GM12878 (cell line): ENCODE measurements at regions of chr17 and their contacts with region 1.

Region 1: DNA sequence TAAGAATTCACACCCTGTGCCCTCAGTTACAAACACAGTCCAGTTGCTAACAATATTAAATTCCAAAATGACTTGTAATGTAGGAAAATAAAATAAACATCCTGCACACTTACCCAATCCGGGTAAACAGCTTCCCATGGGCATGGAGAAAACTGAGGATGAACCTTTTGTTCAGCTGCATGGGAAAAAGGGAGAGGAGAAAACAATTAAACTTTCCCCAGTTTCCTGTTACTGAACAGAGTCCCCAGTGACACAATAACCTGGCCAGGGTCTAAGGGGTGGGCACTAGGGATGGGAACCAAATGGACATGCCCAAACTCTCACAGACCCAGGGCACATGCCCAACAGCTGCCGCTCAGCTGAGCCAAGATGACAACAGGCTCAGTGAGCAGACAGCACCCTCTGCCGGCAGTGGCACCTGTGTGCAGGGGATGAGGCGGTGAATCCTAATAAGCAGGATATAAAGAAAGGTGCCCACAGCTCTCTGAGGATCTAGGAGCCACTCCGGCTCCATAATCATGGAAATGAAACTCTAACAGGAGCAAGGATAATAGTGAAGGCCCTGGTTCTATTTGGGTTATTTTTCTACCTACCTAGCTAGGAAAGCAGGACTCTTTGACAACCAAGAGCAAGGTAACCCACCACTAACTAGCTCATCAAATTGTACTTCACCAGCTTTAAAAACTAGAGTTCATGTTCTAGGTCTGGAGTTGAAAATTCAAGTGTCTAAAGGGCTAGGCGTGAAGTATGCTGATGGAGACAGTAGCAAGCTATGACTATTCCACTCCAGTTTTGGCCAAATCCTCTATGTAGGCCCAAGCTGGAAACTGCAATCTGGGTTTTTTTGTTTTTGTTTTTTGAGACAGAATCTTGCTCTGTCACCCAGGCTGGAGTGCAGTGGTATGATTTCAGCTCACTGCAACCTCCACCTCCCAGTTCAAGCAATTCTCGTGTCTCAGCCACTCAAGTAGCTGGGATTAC is 58.8 kb downstream of the SMG6 start:
- DNase-seq: no peak
- ATAC-seq: peak; percentile 88
- H3K4me3 ChIP-seq: no peak overlapping the region
- H3K27ac ChIP-seq: peak overlapping the region; percentile 84
- H3K4me1 ChIP-seq: peaks cover 25% of the 10 kb centered on the region
- H3K27me3 ChIP-seq: no peaks in the 10 kb centered on the region
- CTCF ChIP-seq: peak; percentile 97 to 98 (median 98); a peak in 5 of 6 replicates
- EP300 ChIP-seq: no peak
- POLR2A ChIP-seq: no peak
- RAD21 ChIP-seq: peak; percentile 100

Region 2: DNA sequence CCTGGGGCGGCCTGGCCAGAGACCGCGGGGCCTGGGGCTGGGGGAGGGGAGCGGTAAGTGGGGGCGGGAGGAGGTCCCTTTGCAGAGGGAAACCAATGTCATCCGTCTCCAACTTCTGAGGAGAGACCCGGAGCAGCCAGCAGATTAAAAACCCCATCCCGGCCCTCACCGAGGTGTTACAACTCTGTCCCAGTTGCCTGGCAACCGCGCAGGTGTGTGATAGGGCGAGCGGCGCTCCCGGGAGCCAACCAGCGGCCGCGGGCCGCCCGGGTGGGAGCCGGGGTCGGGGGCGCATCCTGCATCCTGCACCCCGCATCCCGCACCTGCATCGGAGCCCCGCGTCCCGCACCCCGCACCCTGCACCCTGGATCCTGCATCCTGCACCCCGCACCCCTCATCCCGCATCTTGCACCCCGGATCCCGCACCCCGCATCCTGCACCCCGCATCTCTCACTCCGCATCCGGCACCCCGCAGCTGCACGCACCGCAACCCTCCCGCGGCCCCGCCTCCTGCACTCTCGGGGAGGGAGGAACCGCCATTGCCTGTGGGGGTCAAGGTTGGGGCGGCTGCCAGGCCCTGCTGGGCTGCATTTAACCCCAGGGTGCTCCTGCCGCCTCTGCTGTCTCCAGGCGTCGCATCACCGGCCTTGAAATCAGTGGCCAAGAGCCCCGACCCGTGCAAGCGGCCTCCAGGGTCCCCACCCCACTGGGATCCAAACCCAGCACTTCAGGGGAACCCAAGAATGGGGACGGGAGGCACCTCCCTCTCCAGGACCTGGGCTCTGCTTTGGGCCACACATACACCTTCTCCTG is 267.0 kb before region 1 on chr17:
- CTCF ChIA-PET with region 1: no interaction called
- POLR2A ChIA-PET with region 1: no interaction called
- RAD21 ChIA-PET with region 1: no interaction called
- SMC1A ChIA-PET with region 1: no interaction called
- in situ Hi-C with region 1: no loop called
- intact Hi-C with region 1: no loop called
- DNase-seq: no peak
- ATAC-seq: no peak
- H3K4me3 ChIP-seq: no peak overlapping the region
- H3K27ac ChIP-seq: no peak overlapping the region
- H3K4me1 ChIP-seq: no peaks in the 10 kb centered on the region; the same call in 1 of the 2 replicates
- H3K27me3 ChIP-seq: no peaks in the 10 kb centered on the region; a peak in 1 of 4 replicates
- CTCF ChIP-seq: no peak
- EP300 ChIP-seq: no peak
- POLR2A ChIP-seq: no peak
- RAD21 ChIP-seq: no peak

Region 3: DNA sequence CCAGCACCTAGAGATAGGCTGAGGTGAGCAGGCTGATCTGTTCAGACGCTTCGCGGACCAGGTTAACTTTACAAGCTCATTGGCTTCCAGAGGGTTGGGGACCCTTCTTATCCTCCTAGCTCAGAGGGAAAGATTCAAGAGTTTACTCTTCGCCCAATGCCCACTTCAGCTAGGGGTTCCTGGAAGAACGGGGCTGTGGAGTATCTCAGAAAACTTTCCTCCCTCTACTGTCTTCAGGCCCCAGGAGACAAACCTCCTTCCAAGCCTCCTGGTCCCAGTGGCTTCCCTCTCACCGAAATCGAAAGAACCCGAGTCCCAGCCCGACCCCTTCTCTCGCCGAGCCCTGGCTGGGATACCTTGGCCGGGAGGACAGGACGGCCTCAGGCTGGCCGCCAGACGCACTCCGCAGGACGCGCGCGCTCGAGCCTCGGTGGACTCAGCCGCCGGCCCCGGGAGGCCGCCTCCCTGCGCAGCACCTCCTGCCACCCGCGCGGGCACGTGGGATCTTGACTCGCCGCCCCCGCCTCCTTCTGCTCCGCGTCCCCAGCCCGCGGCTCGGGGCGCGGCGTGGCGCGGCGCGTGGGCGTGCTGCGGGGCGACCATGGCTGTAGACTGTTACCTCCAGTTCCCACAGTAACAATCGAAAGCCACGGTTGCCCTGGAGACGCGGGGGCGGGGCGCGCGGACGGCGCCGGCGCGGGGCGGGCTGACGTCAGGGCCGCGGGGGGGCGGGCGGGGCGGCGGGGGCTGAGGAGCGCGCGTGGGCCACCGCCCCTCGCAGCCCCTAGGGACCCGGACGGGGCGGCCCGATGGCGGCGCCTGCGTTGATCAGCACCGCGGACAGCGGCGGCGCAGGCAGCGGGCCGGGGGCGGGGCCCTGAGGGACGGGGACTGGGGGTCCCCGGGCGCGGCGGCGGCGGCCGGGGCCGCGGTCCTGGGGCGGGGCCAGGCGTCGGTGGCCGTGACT is 195.2 kb before region 1 on chr17:
- CTCF ChIA-PET with region 1: interaction called, 265 read pairs
- POLR2A ChIA-PET with region 1: interaction called, 61 read pairs
- RAD21 ChIA-PET with region 1: interaction called, 271 read pairs
- SMC1A ChIA-PET with region 1: interaction called, 141 read pairs
- in situ Hi-C with region 1: no loop called
- intact Hi-C with region 1: loop called (anchors 1 kb)
- DNase-seq: no peak
- ATAC-seq: peak; percentile 49
- H3K4me3 ChIP-seq: peak overlapping the region; percentile 86
- H3K27ac ChIP-seq: no peak overlapping the region
- H3K4me1 ChIP-seq: peaks cover 9% of the 10 kb centered on the region
- H3K27me3 ChIP-seq: peaks cover 2% of the 10 kb centered on the region in 2 experiments; a peak in 3 of 4 replicates
- CTCF ChIP-seq: no peak
- EP300 ChIP-seq: no peak
- POLR2A ChIP-seq: 0 out of 2 replicates have a peak, but pooled peaks have one; percentile 25
- RAD21 ChIP-seq: no peak

Region 4: DNA sequence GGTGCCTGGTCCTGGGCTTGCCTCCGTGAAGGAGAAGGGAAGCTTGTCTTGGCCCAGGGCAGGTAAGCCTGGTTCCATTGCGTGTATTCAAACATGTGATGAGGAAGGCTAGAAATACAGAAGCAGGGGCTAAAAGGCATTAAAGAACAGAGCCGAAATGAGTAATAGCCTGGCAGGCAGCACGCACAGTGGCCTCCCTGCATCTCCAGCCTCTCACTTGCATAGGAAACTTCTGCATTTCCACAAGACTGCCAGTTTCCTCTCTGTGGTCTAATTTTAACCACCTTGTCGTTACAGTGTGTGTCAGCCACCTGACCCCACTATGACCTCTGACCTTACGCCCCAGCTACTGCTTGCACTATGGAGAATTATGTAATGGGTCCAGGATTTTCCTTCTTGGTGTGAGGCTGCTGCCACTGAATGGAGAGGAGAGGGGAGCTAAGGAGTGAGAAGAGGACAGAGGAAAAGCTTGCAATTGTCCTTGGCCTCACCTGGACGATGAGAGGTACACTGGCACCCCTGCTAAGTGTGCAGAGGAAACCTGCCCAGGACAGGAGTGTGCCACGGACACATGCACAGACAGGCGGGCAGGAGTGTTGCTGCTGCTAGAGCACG is 157.1 kb before region 1 on chr17:
- CTCF ChIA-PET with region 1: interaction called, 126 read pairs
- POLR2A ChIA-PET with region 1: interaction called, 20 read pairs
- RAD21 ChIA-PET with region 1: interaction called, 55 read pairs
- SMC1A ChIA-PET with region 1: interaction called, 39 read pairs
- in situ Hi-C with region 1: no loop called
- intact Hi-C with region 1: no loop called
- DNase-seq: peak; percentile 79
- ATAC-seq: peak; percentile 56
- H3K4me3 ChIP-seq: no peak overlapping the region
- H3K27ac ChIP-seq: peak overlapping the region; percentile 93
- H3K4me1 ChIP-seq: peaks cover 83% of the 10 kb centered on the region
- H3K27me3 ChIP-seq: no peaks in the 10 kb centered on the region
- CTCF ChIP-seq: no peak
- EP300 ChIP-seq: peak; percentile 99
- POLR2A ChIP-seq: no peak; the same call in 1 of the 2 replicates
- RAD21 ChIP-seq: no peak

Region 5: DNA sequence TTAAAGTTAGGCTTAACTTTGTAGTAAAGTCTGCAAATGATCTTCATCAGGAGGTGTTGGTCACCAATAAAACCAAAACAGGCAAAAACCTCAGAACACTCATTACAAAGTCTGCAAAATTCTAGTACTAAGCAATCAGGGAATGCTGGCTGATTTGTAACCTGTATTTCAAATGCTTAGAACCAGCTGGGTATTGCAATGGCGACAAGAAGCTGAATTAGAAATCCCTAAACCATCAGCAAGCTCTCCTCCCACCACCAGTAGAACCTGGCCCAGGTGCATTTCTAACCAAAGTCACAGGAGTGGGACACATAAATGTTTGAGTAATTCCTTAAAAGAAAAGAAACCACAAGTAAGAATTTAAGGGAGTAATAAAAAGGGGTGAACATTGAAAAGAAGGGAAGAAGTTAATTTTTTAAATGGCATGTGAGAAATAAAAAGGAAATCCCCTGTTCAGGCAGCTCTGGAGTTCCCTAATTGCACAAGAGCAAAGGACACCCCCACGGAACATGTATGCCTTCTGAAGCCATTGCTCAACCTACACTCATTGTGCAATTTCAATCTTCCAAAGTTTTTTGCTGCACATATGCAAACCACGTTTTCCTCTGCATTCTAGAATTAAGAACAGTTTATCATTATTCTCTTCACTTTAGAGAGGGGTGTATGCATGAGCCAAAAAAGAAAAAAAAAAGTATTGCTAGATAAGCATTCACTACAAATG is 87.0 kb before region 1 on chr17:
- CTCF ChIA-PET with region 1: interaction called, 22 read pairs
- POLR2A ChIA-PET with region 1: no interaction called
- RAD21 ChIA-PET with region 1: interaction called, 6 read pairs
- SMC1A ChIA-PET with region 1: interaction called, 11 read pairs
- in situ Hi-C with region 1: no loop called
- intact Hi-C with region 1: no loop called
- DNase-seq: no peak
- ATAC-seq: no peak
- H3K4me3 ChIP-seq: no peak overlapping the region
- H3K27ac ChIP-seq: no peak overlapping the region
- H3K4me1 ChIP-seq: no peaks in the 10 kb centered on the region
- H3K27me3 ChIP-seq: no peaks in the 10 kb centered on the region
- CTCF ChIP-seq: no peak
- EP300 ChIP-seq: no peak
- POLR2A ChIP-seq: no peak
- RAD21 ChIP-seq: no peak

Region 6: DNA sequence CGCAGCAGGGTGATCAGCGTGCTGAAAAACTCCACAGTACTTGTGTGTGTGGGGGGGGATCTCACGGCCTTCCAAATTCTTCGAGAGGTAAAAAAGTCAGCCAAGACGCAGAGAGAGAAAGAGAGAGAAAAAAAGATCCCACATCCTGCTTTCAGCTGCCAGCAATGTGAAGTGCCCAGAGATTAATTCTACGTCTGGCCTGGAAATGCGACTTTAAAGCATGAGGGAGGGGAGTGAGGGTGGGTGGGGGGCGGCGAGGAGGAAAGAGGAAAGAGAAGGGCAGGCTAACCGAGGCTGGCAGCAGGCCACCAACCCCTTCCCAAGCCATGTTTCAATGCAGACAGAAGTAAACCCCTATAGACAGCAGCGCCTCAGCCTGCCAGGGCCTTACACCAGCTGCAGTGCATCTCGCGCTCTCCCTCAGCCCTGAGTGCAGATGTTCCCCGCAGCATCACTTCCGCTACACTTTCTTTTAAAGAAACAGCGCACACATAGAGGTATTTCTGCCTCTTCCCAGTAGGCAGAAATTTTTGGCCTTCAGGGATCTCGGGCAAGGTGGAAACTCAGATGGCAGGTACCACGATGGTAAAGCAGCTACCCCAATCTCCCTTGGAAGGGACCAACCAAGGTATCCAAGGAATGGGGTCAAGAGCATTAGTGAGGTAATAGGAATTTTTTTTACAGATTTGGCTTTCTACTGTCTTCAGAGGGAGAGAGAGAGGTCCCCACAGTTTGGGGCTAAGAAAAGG is 29.0 kb before region 1 on chr17:
- CTCF ChIA-PET with region 1: interaction called, 9 read pairs
- POLR2A ChIA-PET with region 1: interaction called, 4 read pairs
- RAD21 ChIA-PET with region 1: interaction called, 49 read pairs
- SMC1A ChIA-PET with region 1: interaction called, 49 read pairs
- in situ Hi-C with region 1: no loop called
- intact Hi-C with region 1: no loop called
- DNase-seq: no peak
- ATAC-seq: peak; percentile 99
- H3K4me3 ChIP-seq: peak overlapping the region; percentile 77
- H3K27ac ChIP-seq: peak overlapping the region; percentile 100
- H3K4me1 ChIP-seq: peaks cover 32% of the 10 kb centered on the region
- H3K27me3 ChIP-seq: no peaks in the 10 kb centered on the region
- CTCF ChIP-seq: 0 out of 6 replicates have a peak, but pooled peaks of 1 of the 3 experiments have one; percentile 6
- EP300 ChIP-seq: no peak
- POLR2A ChIP-seq: peak; percentile 90
- RAD21 ChIP-seq: 0 out of 2 replicates have a peak, but pooled peaks have one; percentile 1

Region 7: DNA sequence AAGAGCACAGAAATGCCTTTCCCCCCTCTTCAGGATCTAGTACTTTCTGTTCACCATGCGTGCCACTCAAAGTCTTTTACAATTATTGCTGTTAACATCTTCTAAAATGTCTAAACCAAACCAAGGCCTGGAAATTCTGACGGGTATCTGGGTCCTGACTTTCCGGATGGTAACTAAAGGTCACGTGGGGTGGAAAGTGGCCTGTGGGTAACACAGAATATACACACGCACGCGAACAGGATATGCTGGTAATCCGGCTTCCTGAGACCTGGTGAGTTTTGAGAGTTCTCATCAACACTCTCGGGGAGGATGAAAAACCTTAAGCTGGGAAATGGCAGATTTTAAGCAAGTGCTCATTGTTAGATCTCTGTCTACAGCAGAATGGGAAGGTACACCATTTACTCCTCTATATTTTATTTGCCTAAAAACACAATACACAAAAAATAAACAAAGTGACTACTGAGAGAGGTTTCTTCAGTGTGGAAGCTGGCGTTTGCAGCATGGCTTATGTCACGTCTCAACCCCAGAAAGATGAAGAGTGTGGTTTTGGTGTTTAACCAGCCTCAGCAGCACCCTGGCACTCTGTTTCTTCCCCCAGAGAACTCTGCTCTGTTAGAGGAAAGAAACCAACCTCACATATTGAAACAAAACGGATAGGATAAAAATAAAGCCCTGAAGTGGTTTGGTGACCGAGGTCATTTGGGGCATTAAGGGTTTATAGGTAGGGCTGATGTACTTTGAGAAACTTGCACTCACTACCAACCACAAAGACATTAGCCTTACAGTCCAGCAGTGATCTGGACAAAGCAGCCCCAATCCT is 21.4 kb after region 1 on chr17:
- CTCF ChIA-PET with region 1: interaction called, 30 read pairs
- POLR2A ChIA-PET with region 1: interaction called, 25 read pairs
- RAD21 ChIA-PET with region 1: interaction called, 52 read pairs
- SMC1A ChIA-PET with region 1: interaction called, 149 read pairs
- in situ Hi-C with region 1: no loop called
- intact Hi-C with region 1: no loop called
- DNase-seq: peak; percentile 97
- ATAC-seq: peak; percentile 90
- H3K4me3 ChIP-seq: peak overlapping the region; percentile 28; the same call in 1 of the 2 replicates
- H3K27ac ChIP-seq: peak overlapping the region; percentile 99
- H3K4me1 ChIP-seq: peaks cover 61% of the 10 kb centered on the region
- H3K27me3 ChIP-seq: no peaks in the 10 kb centered on the region
- CTCF ChIP-seq: no peak
- EP300 ChIP-seq: peak; percentile 58 to 87; a peak in 3 of 4 replicates
- POLR2A ChIP-seq: peak; percentile 64
- RAD21 ChIP-seq: peak; percentile 16; the same call in 1 of the 2 replicates

Region 8: DNA sequence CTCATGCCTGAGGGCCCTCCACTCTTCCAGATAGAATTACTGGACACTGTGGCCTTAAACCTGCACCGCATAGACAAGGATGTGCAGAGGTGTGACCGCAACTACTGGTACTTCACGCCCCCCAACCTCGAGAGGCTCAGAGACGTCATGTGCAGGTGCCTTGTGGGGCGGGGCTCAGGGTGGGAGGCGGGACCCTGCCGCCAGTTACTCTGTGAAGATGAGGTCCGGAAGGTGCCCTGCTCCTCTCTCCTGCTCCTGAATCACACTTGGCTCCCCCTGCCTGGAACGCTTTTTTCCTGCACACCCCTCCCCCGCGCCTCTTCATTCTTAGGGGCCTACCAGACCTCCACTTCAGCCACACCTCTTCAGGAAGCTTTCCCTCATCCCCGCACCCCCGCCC is 131.3 kb after region 1 on chr17:
- CTCF ChIA-PET with region 1: no interaction called
- POLR2A ChIA-PET with region 1: no interaction called
- RAD21 ChIA-PET with region 1: no interaction called
- SMC1A ChIA-PET with region 1: no interaction called
- in situ Hi-C with region 1: no loop called
- intact Hi-C with region 1: no loop called
- DNase-seq: no peak
- ATAC-seq: no peak
- H3K4me3 ChIP-seq: no peak overlapping the region
- H3K27ac ChIP-seq: no peak overlapping the region
- H3K4me1 ChIP-seq: no peaks in the 10 kb centered on the region
- H3K27me3 ChIP-seq: no peaks in the 10 kb centered on the region
- CTCF ChIP-seq: no peak
- EP300 ChIP-seq: no peak
- POLR2A ChIP-seq: no peak
- RAD21 ChIP-seq: no peak